Cardiac septum (tissue), 1 donor: ENCODE measurements at regions of chr6 and their contacts with region 1.

Region 1: GRCh38 chr6:1596088-1596852 is 13.4 kb upstream of the FOXC1 start:
- DNase-seq: peak; percentile 88

Region 2: GRCh38 chr6:2448820-2449571 is 852.7 kb after region 1 on chr6:
- intact Hi-C with region 1: loop called (anchors 5 kb)
- DNase-seq: no peak

Region 3: GRCh38 chr6:2695454-2696095 is 1099.3 kb after region 1 on chr6:
- intact Hi-C with region 1: loop called (anchors 5 kb)
- DNase-seq: no peak

Region 4: GRCh38 chr6:2749969-2750600 is 1153.8 kb after region 1 on chr6:
- intact Hi-C with region 1: loop called (anchors 5 kb)
- DNase-seq: no peak